ENCODE measurements at regions of chr22 and their contacts with region 1.

Region 1: GRCh38 chr22:28051787-28052356 is 132.8 kb upstream of the PITPNB start:
- DNase-seq: no peak
- H3K4me3 ChIP-seq: no peak overlapping the region
- H3K27ac ChIP-seq: no peak overlapping the region
- H3K4me1 ChIP-seq: peaks cover 4 to 19% (median 10%) of the 10 kb centered on the region in 4 donors
- H3K27me3 ChIP-seq: no peaks in the 10 kb centered on the region
- CTCF ChIP-seq: peak; percentile 84 to 93 (median 84)
- EP300 ChIP-seq: no peak
- POLR2A ChIP-seq: no peak

Region 2: GRCh38 chr22:28183078-28183860 is 131.4 kb after region 1 on chr22:
- intact Hi-C with region 1: no loop called
- DNase-seq: no peak
- H3K4me3 ChIP-seq: no peak overlapping the region
- H3K27ac ChIP-seq: no peak overlapping the region
- H3K4me1 ChIP-seq: peaks cover 11 to 29% (median 22%) of the 10 kb centered on the region in 4 donors
- H3K27me3 ChIP-seq: no peaks in the 10 kb centered on the region
- CTCF ChIP-seq: no peak
- EP300 ChIP-seq: no peak
- POLR2A ChIP-seq: no peak

Region 3: DNA sequence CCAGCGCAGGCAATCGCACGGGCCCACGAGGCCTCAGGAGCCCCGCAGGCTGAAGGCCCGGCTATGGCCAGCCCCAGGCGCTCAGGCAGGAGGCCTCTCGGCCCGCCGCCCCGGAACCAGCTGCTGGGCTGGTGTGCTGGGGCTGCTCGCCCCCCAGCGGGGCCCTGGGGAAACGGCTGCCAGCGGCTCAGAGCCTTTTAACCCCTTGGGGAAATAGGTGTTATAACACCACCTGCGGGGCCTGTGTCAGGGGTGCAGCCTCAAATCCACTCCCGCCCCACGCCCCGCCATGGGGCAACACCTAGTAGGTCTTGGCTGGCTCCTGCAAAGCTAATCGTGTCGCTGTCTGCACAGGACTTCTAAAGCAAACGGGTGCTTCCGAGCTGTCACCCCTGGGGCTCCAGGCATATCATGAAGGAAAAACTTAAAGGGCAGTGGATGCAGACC is 390.4 kb after region 1 on chr22:
- intact Hi-C with region 1: loop called (anchors 5 kb)
- DNase-seq: peak; percentile 93
- H3K4me3 ChIP-seq: peak overlapping the region; percentile 58 to 62 (median 61)
- H3K27ac ChIP-seq: peak overlapping the region; percentile 68 to 82 (median 72)
- H3K4me1 ChIP-seq: peaks cover 12 to 44% (median 40%) of the 10 kb centered on the region in 4 donors
- H3K27me3 ChIP-seq: no peaks in the 10 kb centered on the region
- CTCF ChIP-seq: peak; percentile 62 to 69 (median 67)
- EP300 ChIP-seq: no peak
- POLR2A ChIP-seq: no peak

Region 4: DNA sequence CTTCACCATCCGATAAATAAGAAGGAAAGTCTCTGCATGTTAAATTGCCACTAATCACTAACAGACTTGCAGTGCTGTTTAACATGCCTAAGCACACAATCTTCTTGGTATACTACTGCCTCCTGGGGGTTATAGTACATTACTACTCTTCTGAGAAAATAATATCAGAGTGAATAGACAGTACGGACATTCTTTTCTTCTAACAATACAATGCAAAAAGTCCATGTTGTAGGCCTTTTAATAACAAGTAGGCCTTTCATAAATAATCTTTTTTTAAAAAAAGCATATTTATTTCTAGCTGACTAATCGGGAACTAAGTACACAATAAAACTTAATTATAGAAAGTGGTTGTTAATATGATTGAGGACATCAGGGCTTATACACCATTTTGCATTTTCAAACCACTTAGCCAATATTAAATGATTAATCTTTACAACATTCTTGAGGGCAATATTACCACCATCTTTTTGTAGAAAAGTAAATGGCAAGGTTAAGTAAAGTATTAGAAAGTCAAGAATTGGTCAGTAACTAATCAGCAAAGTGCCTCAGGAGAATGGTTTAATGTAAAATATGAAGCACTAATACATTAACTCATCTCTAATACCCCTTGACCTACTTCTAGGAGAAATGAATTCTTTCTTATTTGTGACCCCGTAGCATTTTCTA is 543.1 kb after region 1 on chr22:
- intact Hi-C with region 1: loop called (anchors 2 kb)
- DNase-seq: no peak
- H3K4me3 ChIP-seq: no peak overlapping the region
- H3K27ac ChIP-seq: no peak overlapping the region
- H3K4me1 ChIP-seq: peaks cover 0 to 10% (median 8%) of the 10 kb centered on the region in 4 donors
- H3K27me3 ChIP-seq: no peaks in the 10 kb centered on the region
- CTCF ChIP-seq: peak; percentile 73 to 85 (median 79)
- EP300 ChIP-seq: no peak
- POLR2A ChIP-seq: no peak

Region 5: GRCh38 chr22:28829358-28830181 is 777.7 kb after region 1 on chr22:
- intact Hi-C with region 1: loop called (anchors 10 kb)
- DNase-seq: peak; percentile 93
- H3K4me3 ChIP-seq: no peak overlapping the region
- H3K27ac ChIP-seq: peak overlapping the region in 3 of 4 donors; percentile 5 to 55 (median 9)
- H3K4me1 ChIP-seq: peaks cover 9 to 16% (median 13%) of the 10 kb centered on the region in 4 donors
- H3K27me3 ChIP-seq: no peaks in the 10 kb centered on the region
- CTCF ChIP-seq: peak; percentile 97 to 98 (median 98)
- EP300 ChIP-seq: no peak
- POLR2A ChIP-seq: no peak

Measured in esophagus muscularis mucosa (tissue), 4 donors.